Activated CD8-positive, alpha-beta T cell treated with anti-CD3 and anti-CD28 coated beads for 36 hours (primary cell): ENCODE measurements at regions of chr1 and their contacts with region 1.

Region 1: GRCh38 chr1:206489980-206490770 is 17.2 kb upstream of the RASSF5 start:
- DNase-seq: peak; percentile 84
- ATAC-seq: peak; percentile 98
- H3K4me3 Mint-ChIP-seq: no peak overlapping the region
- H3K27ac Mint-ChIP-seq: peak overlapping the region; percentile 42
- H3K4me1 Mint-ChIP-seq: peaks cover 2% of the 10 kb centered on the region
- H3K27me3 Mint-ChIP-seq: no peaks in the 10 kb centered on the region
- CTCF ChIP-seq: peak; percentile 86

Region 2: DNA sequence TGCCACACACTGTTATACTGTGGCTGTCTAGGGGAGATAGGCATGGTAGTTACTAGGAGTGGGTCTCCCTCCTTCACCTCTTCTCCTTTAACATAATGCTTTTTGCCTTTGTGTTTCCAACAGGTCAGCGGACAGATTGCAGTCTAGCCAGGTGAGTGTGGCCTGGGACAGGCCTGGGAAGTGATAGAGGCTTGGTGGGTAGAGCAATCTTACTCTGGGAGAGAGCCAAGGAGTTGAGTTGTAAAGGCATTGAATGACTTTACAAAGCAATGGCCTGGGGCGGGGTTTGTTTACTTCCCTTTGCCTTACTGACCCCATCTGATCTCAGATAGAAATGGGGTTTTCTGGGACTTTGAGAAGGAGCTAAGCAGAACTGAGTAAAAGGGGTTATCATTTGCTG is 70.9 kb before region 1 on chr1:
- CTCF ChIA-PET with region 1: no interaction called
- POLR2A ChIA-PET with region 1: no interaction called
- intact Hi-C with region 1: no loop called
- DNase-seq: no peak
- ATAC-seq: no peak
- H3K4me3 Mint-ChIP-seq: no peak overlapping the region
- H3K27ac Mint-ChIP-seq: no peak overlapping the region
- H3K4me1 Mint-ChIP-seq: no peaks in the 10 kb centered on the region
- H3K27me3 Mint-ChIP-seq: no peaks in the 10 kb centered on the region
- CTCF ChIP-seq: no peak

Region 3: DNA sequence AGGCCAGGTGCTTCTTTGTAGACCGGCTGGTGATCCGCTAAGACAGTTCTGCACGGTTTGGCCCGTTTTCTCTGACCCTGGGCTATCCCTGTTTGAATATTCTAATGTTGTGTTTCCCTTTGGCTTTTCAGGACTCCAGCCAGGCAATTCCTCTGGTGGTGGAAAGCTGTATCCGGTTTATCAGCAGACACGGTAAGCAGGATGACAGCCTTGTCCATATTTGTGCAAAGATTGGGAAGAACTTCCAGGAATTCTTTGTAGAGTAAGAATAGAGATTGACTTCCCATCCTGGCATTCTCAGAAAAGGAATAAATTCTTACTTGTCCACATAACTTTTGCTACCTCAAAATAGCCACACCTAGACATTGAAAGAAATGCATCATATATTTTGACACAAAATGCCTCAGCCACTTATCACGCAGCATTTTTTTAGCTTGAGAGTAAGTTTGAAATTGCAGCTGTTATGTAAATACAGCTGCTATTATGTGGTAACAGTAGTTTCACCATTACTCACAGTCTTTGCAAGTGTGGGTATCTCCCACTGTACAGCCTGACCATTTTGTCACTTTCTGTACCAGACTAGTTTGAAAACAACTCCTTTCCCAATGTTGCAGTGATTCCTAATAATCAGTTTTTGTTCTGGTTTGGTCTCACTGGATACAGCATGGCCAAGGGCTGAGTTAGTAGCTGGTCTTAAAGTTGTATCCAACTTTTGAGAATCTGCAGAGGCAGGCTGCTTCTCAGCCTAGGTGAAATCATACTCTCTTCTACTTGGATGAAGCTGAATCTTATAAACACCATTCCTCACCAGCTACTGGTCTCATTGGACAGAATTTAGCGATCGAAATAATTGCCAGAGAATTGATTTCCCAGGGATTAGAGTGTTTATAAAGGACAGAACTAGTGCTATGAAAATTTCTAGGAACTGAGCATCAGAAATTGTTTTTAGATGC is 59.9 kb before region 1 on chr1:
- CTCF ChIA-PET with region 1: no interaction called
- POLR2A ChIA-PET with region 1: no interaction called
- intact Hi-C with region 1: no loop called
- DNase-seq: no peak
- ATAC-seq: peak; percentile 61
- H3K4me3 Mint-ChIP-seq: no peak overlapping the region
- H3K27ac Mint-ChIP-seq: no peak overlapping the region
- H3K4me1 Mint-ChIP-seq: no peaks in the 10 kb centered on the region
- H3K27me3 Mint-ChIP-seq: no peaks in the 10 kb centered on the region
- CTCF ChIP-seq: no peak

Region 4: GRCh38 chr1:206461602-206462455 is 28.3 kb before region 1 on chr1:
- CTCF ChIA-PET with region 1: interaction called, 14 read pairs
- POLR2A ChIA-PET with region 1: interaction called, 3 read pairs
- intact Hi-C with region 1: no loop called
- DNase-seq: peak; percentile 91
- ATAC-seq: peak; percentile 79
- H3K4me3 Mint-ChIP-seq: no peak overlapping the region
- H3K27ac Mint-ChIP-seq: no peak overlapping the region
- H3K4me1 Mint-ChIP-seq: peaks cover 40% of the 10 kb centered on the region
- H3K27me3 Mint-ChIP-seq: no peaks in the 10 kb centered on the region
- CTCF ChIP-seq: peak; percentile 89

Region 5: GRCh38 chr1:206479183-206480125 is 10.7 kb before region 1 on chr1:
- CTCF ChIA-PET with region 1: interaction called, 45 read pairs
- POLR2A ChIA-PET with region 1: interaction called, 5 read pairs
- intact Hi-C with region 1: no loop called
- DNase-seq: peak; percentile 91
- ATAC-seq: peak; percentile 87
- H3K4me3 Mint-ChIP-seq: no peak overlapping the region
- H3K27ac Mint-ChIP-seq: peak overlapping the region; percentile 60
- H3K4me1 Mint-ChIP-seq: peaks cover 33% of the 10 kb centered on the region
- H3K27me3 Mint-ChIP-seq: no peaks in the 10 kb centered on the region
- CTCF ChIP-seq: peak; percentile 79

Region 6: GRCh38 chr1:206551986-206552326 is 61.8 kb after region 1 on chr1:
- CTCF ChIA-PET with region 1: interaction called, 17 read pairs
- POLR2A ChIA-PET with region 1: interaction called, 7 read pairs
- intact Hi-C with region 1: no loop called
- DNase-seq: peak; percentile 94
- ATAC-seq: peak; percentile 82
- H3K4me3 Mint-ChIP-seq: peak overlapping the region; percentile 64
- H3K27ac Mint-ChIP-seq: peak overlapping the region; percentile 88
- H3K4me1 Mint-ChIP-seq: peaks cover 53% of the 10 kb centered on the region
- H3K27me3 Mint-ChIP-seq: no peaks in the 10 kb centered on the region
- CTCF ChIP-seq: no peak

Region 7: GRCh38 chr1:206612129-206612876 is 122.1 kb after region 1 on chr1 and contains the start of gene EIF2D:
- CTCF ChIA-PET with region 1: interaction called, 19 read pairs
- POLR2A ChIA-PET with region 1: no interaction called
- intact Hi-C with region 1: no loop called
- DNase-seq: peak; percentile 95
- ATAC-seq: peak; percentile 96
- H3K4me3 Mint-ChIP-seq: peak within 1 kb of the TSS; percentile 91
- H3K27ac Mint-ChIP-seq: peak within 1 kb of the TSS; percentile 92
- H3K4me1 Mint-ChIP-seq: peaks cover 39% of the 10 kb centered on the region
- H3K27me3 Mint-ChIP-seq: no peaks in the 10 kb centered on the region
- CTCF ChIP-seq: peak; percentile 89
- total RNA-seq, gene EIF2D: 100 to 102 TPM

Region 8: DNA sequence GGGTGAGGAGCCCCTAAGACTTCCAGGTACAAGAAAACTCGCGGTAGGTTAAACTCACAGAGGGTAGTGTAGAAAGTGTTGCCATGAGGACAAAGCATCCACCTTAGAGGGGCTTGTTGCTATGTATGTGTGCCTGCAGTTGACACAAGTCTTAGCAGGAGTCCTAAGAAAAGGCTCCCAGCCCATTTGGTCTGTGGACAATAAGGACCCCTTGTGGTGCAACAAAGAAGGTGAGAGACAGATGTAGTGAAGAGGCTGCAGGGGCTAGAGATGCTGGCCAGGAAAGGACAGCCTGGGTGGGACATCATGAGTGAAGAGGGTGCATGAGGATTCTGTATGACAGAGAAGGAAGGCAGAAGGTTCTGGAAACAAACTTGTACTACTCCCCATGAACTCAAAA is 318.4 kb after region 1 on chr1:
- CTCF ChIA-PET with region 1: no interaction called
- POLR2A ChIA-PET with region 1: no interaction called
- intact Hi-C with region 1: no loop called
- DNase-seq: peak; percentile 69
- ATAC-seq: peak; percentile 89
- H3K4me3 Mint-ChIP-seq: no peak overlapping the region
- H3K27ac Mint-ChIP-seq: no peak overlapping the region
- H3K4me1 Mint-ChIP-seq: peaks cover 49% of the 10 kb centered on the region
- H3K27me3 Mint-ChIP-seq: no peaks in the 10 kb centered on the region
- CTCF ChIP-seq: peak; percentile 69

Region 9: DNA sequence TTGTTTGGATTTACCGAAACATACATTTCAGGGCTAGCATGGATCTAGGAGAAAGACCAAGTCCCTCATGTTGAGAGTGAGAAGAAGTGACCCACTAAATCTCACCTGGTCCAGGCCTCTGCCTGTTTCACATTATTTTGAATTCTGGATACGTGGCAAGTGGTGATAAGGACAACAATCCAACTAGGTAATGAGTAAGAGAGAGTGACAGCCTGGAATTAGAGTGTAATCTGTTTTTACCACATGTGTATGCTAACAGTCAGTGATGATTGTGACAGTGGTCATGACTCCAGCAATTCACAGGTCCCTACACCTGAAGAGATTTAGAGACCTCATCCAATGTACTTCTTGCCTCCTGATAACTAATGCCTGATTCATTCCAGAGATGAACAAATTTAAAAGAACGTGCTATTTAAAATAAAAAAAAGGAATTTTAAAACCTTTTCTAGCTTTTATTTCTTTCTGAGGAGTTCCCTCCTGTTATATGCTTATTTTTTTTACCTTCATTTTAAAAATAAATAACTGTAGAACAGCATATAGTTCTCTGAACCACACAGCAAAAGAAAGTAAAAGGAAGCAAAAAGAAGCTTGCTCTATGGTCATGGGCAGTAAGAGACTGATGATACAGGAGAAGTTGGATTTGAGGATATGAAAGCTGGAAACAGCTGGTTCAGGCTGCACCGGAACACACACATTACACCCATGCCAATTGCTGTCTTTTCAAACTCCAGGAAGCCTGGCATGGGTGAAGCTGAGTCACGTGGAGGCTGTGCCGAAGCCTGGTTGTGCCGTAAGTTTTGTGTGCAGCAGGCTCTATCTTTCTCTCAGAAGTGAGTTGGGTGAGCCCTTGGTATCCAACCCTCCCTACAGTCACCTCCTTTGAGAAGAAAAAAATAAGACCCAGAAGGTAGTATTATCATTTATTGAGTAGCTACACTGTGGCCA is 527.7 kb after region 1 on chr1:
- CTCF ChIA-PET with region 1: no interaction called
- POLR2A ChIA-PET with region 1: no interaction called
- intact Hi-C with region 1: no loop called
- DNase-seq: no peak
- ATAC-seq: no peak
- H3K4me3 Mint-ChIP-seq: no peak overlapping the region
- H3K27ac Mint-ChIP-seq: no peak overlapping the region
- H3K4me1 Mint-ChIP-seq: peaks cover 8% of the 10 kb centered on the region
- H3K27me3 Mint-ChIP-seq: peaks cover 5% of the 10 kb centered on the region
- CTCF ChIP-seq: no peak